AG04450 (cell line): ENCODE measurements at regions of chr13 and their contacts with region 1.

Region 1: GRCh38 chr13:20518660-20519100 is 7.0 kb downstream of the CRYL1 start:
- DNase-seq: no peak
- H3K4me3 ChIP-seq: no peak overlapping the region
- H3K27ac ChIP-seq: no peak overlapping the region
- H3K27me3 ChIP-seq: no peaks in the 10 kb centered on the region
- CTCF ChIP-seq: no peak

Region 2: GRCh38 chr13:20505405-20506366 is 13.0 kb before region 1 on chr13:
- CTCF ChIA-PET with region 1: no interaction called
- POLR2A ChIA-PET with region 1: interaction called, 15 read pairs
- DNase-seq: no peak
- H3K4me3 ChIP-seq: no peak overlapping the region
- H3K27ac ChIP-seq: no peak overlapping the region
- H3K27me3 ChIP-seq: no peaks in the 10 kb centered on the region
- CTCF ChIP-seq: no peak